Caco-2 (cell line): ENCODE measurements at regions of chr6 and their contacts with region 1.

Region 1: GRCh38 chr6:90478789-90479602 is 107.9 kb downstream of the MAP3K7 start:
- DNase-seq: peak; percentile 88
- H3K4me3 ChIP-seq: no peak overlapping the region
- H3K4me3 Mint-ChIP-seq: no peak overlapping the region
- H3K27ac Mint-ChIP-seq: peak overlapping the region; percentile 10
- H3K4me1 ChIP-seq: no peaks in the 10 kb centered on the region
- H3K4me1 Mint-ChIP-seq: peaks cover 7% of the 10 kb centered on the region
- H3K27me3 ChIP-seq: no peaks in the 10 kb centered on the region
- H3K27me3 Mint-ChIP-seq: no peaks in the 10 kb centered on the region
- CTCF ChIP-seq: peak; percentile 74 to 88

Region 2: DNA sequence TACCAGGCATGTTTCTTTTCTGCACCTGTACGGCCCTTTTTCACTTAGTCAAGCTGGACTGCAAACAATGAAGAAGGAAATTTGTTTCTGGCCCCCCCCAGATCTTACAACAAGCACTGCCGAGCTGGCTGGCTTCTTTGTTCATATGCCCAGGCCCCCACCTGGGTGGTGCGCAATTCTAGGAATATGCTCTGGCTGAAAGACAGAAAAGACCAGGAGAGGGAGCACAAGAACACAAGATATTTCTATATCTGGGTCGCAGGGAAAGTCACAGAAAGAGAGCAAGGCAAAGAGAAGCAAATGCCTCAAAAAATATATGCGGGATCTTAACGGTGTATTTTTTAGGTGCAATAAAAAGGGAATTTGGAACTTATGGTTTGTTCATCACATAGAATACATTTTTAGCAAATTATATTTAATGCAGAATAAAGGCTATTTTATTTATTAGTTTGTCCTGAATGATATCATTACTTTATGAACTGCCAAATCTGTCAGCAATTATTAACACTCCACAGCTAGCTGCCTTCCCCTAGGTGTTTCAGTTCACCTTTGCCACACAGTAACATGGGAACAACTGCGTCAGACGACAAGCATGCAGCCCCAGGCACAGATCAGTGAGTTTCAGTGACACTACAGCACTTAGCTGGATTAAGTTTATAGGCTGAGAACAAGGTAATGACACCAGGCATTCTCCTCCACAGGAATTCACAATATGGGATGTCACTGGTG is 508.2 kb before region 1 on chr6:
- CTCF ChIA-PET with region 1: interaction called, 5 read pairs
- POLR2A ChIA-PET with region 1: no interaction called
- intact Hi-C with region 1: loop called (anchors 1 kb)
- DNase-seq: peak in 1 of 2 experiments; percentile 54
- H3K4me3 ChIP-seq: no peak overlapping the region
- H3K4me3 Mint-ChIP-seq: no peak overlapping the region
- H3K27ac Mint-ChIP-seq: no peak overlapping the region
- H3K4me1 ChIP-seq: no peaks in the 10 kb centered on the region
- H3K4me1 Mint-ChIP-seq: no peaks in the 10 kb centered on the region
- H3K27me3 ChIP-seq: no peaks in the 10 kb centered on the region
- H3K27me3 Mint-ChIP-seq: peaks cover 13% of the 10 kb centered on the region
- CTCF ChIP-seq: peak; percentile 33 to 59

Region 3: GRCh38 chr6:90080876-90081481 is 398.0 kb before region 1 on chr6:
- CTCF ChIA-PET with region 1: no interaction called
- POLR2A ChIA-PET with region 1: no interaction called
- intact Hi-C with region 1: loop called (anchors 10 kb)
- DNase-seq: no peak
- H3K4me3 ChIP-seq: no peak overlapping the region
- H3K4me3 Mint-ChIP-seq: no peak overlapping the region
- H3K27ac Mint-ChIP-seq: no peak overlapping the region
- H3K4me1 ChIP-seq: no peaks in the 10 kb centered on the region
- H3K4me1 Mint-ChIP-seq: no peaks in the 10 kb centered on the region
- H3K27me3 ChIP-seq: no peaks in the 10 kb centered on the region
- H3K27me3 Mint-ChIP-seq: peaks cover 28% of the 10 kb centered on the region
- CTCF ChIP-seq: no peak

Region 4: GRCh38 chr6:90285611-90286381 is 193.2 kb before region 1 on chr6:
- CTCF ChIA-PET with region 1: interaction called, 5 read pairs
- POLR2A ChIA-PET with region 1: no interaction called
- intact Hi-C with region 1: loop called (anchors 1 kb)
- DNase-seq: peak; percentile 17 to 33
- H3K4me3 ChIP-seq: no peak overlapping the region
- H3K4me3 Mint-ChIP-seq: no peak overlapping the region
- H3K27ac Mint-ChIP-seq: no peak overlapping the region
- H3K4me1 ChIP-seq: 0 out of 2 replicates have a peak, but pooled peaks cover 3% of the 10 kb centered on the region
- H3K4me1 Mint-ChIP-seq: peaks cover 5% of the 10 kb centered on the region
- H3K27me3 ChIP-seq: no peaks in the 10 kb centered on the region; the same call in 1 of the 2 replicates
- H3K27me3 Mint-ChIP-seq: peaks cover 12% of the 10 kb centered on the region
- CTCF ChIP-seq: no peak

Region 5: GRCh38 chr6:90393232-90393884 is 85.6 kb before region 1 on chr6:
- CTCF ChIA-PET with region 1: interaction called, 4 read pairs
- POLR2A ChIA-PET with region 1: no interaction called
- intact Hi-C with region 1: loop called (anchors 1 kb)
- DNase-seq: peak in 1 of 2 experiments; percentile 58
- H3K4me3 ChIP-seq: no peak overlapping the region
- H3K4me3 Mint-ChIP-seq: no peak overlapping the region
- H3K27ac Mint-ChIP-seq: no peak overlapping the region
- H3K4me1 ChIP-seq: no peaks in the 10 kb centered on the region
- H3K4me1 Mint-ChIP-seq: no peaks in the 10 kb centered on the region
- H3K27me3 ChIP-seq: 0 out of 2 replicates have a peak, but pooled peaks cover 1% of the 10 kb centered on the region
- H3K27me3 Mint-ChIP-seq: peaks cover 10% of the 10 kb centered on the region
- CTCF ChIP-seq: peak; percentile 69 to 73